ENCODE measurements at regions of chr12 and their contacts with region 1.

Region 1: GRCh38 chr12:67515679-67516340 is 132.7 kb upstream of the DYRK2 start:
- DNase-seq: peak; percentile 64 to 78 (median 70)
- H3K4me3 ChIP-seq: peak overlapping the region in 1 of 2 donors; percentile 4
- H3K4me3 Mint-ChIP-seq: peak overlapping the region; percentile 16 to 79 (median 69)
- H3K27ac ChIP-seq: no peak overlapping the region
- H3K27ac Mint-ChIP-seq: peak overlapping the region; percentile 50 to 91 (median 86)
- H3K4me1 ChIP-seq: peaks cover 64% of the 10 kb centered on the region
- H3K4me1 Mint-ChIP-seq: peaks cover 46 to 73% (median 54%) of the 10 kb centered on the region in 4 donors
- H3K27me3 ChIP-seq: no peaks in the 10 kb centered on the region
- H3K27me3 Mint-ChIP-seq: no peaks in the 10 kb centered on the region

Region 2: GRCh38 chr12:67173258-67173657 is 342.6 kb before region 1 on chr12:
- CTCF ChIA-PET with region 1: no interaction called
- POLR2A ChIA-PET with region 1: no interaction called
- intact Hi-C with region 1: no loop called
- DNase-seq: no peak
- H3K4me3 ChIP-seq: no peak overlapping the region
- H3K4me3 Mint-ChIP-seq: no peak overlapping the region
- H3K27ac ChIP-seq: no peak overlapping the region
- H3K27ac Mint-ChIP-seq: no peak overlapping the region
- H3K4me1 ChIP-seq: no peaks in the 10 kb centered on the region
- H3K4me1 Mint-ChIP-seq: no peaks in the 10 kb centered on the region
- H3K27me3 ChIP-seq: no peaks in the 10 kb centered on the region
- H3K27me3 Mint-ChIP-seq: peaks cover 13 to 15% of the 10 kb centered on the region in 2 donors

Region 3: GRCh38 chr12:67220065-67220464 is 295.7 kb before region 1 on chr12:
- CTCF ChIA-PET with region 1: no interaction called
- POLR2A ChIA-PET with region 1: no interaction called
- intact Hi-C with region 1: no loop called
- DNase-seq: no peak
- H3K4me3 ChIP-seq: no peak overlapping the region
- H3K4me3 Mint-ChIP-seq: no peak overlapping the region
- H3K27ac ChIP-seq: no peak overlapping the region
- H3K27ac Mint-ChIP-seq: peak overlapping the region in 1 of 7 donors; percentile 39
- H3K4me1 ChIP-seq: no peaks in the 10 kb centered on the region
- H3K4me1 Mint-ChIP-seq: no peaks in the 10 kb centered on the region
- H3K27me3 ChIP-seq: no peaks in the 10 kb centered on the region
- H3K27me3 Mint-ChIP-seq: peaks cover 0 to 3% of the 10 kb centered on the region in 2 donors

Region 4: DNA sequence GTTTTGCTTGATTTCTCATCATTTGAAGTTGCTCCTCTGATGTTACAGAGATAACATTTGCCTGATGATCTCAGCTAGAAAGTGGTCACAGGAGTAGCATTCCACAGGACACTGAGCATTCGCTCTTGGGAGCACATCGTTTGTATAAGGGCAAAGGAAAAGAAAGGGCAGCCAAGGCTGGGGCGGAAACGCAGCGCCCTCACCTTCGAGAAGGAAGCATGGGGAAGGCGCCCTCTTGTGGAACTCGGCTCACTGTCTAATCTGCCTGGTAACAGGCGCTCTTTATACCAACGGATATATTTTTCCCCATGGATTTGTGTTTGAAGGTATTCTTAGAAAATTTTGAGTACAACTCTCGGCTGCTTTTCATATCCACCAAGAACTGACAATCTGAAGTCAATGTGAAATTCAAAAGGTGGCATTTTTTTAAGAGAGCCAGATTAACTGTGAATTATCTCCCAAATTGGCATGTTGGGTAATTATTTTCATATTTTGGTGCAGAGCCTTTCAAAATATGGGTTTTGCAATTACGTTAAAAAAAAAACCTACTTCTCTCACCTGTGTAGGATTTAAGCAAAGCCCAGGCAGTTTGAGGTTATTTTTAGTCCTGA is 74.0 kb before region 1 on chr12:
- CTCF ChIA-PET with region 1: interaction called, 12 read pairs
- POLR2A ChIA-PET with region 1: interaction called, 6 read pairs
- intact Hi-C with region 1: loop called (anchors 5 kb)
- DNase-seq: peak; percentile 68 to 79 (median 68)
- H3K4me3 ChIP-seq: no peak overlapping the region
- H3K4me3 Mint-ChIP-seq: peak overlapping the region; percentile 43 to 72 (median 68)
- H3K27ac ChIP-seq: no peak overlapping the region
- H3K27ac Mint-ChIP-seq: peak overlapping the region in 6 of 7 donors; percentile 10 to 86 (median 82)
- H3K4me1 ChIP-seq: peaks cover 12% of the 10 kb centered on the region
- H3K4me1 Mint-ChIP-seq: peaks cover 21 to 35% (median 27%) of the 10 kb centered on the region in 4 donors
- H3K27me3 ChIP-seq: no peaks in the 10 kb centered on the region
- H3K27me3 Mint-ChIP-seq: no peaks in the 10 kb centered on the region

Region 5: DNA sequence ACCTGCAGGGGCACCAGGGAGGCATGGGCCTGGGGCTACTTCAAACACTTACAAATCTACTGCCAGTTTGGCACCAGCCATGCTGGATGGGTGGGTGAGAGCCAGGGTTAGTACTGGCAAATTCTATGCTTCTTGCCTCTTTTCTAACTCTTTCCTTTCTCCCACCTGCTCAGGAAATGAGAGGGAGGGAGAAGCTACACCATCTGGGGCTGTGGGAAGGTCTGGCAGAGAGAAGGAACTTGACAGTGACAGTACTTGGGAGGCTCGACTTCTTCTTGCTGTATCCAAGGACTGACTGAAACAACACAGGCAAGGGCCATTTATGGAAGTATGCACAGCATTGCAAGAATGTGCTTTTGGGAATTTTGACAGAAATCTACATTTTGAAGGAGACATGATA is 16.8 kb before region 1 on chr12:
- CTCF ChIA-PET with region 1: interaction called, 6 read pairs
- POLR2A ChIA-PET with region 1: interaction called, 10 read pairs
- intact Hi-C with region 1: no loop called
- DNase-seq: no peak
- H3K4me3 ChIP-seq: no peak overlapping the region
- H3K4me3 Mint-ChIP-seq: no peak overlapping the region
- H3K27ac ChIP-seq: no peak overlapping the region
- H3K27ac Mint-ChIP-seq: no peak overlapping the region
- H3K4me1 ChIP-seq: peaks cover 8% of the 10 kb centered on the region
- H3K4me1 Mint-ChIP-seq: peaks cover 16 to 25% (median 23%) of the 10 kb centered on the region in 4 donors
- H3K27me3 ChIP-seq: no peaks in the 10 kb centered on the region
- H3K27me3 Mint-ChIP-seq: no peaks in the 10 kb centered on the region

Region 6: DNA sequence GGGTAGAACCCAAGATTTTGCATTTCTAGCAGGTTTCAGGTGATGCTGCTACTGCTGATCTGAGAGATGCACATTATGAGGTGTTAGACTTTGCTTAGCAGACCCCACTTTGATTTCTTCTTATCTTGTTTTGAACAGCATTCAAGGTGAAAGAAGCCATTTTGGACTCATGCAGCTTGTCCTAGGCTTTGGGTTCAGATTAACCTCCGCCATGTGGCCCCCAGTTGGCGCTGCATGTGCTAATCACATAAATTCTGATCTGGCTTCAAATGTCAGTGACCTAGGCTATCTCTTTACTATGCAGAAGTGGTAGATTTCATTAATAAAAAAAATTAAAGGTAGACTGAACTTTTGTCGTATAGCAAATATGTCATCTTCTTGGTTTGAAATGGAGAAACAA is 43.0 kb after region 1 on chr12:
- CTCF ChIA-PET with region 1: interaction called, 6 read pairs
- POLR2A ChIA-PET with region 1: interaction called, 29 read pairs
- intact Hi-C with region 1: no loop called
- DNase-seq: no peak
- H3K4me3 ChIP-seq: no peak overlapping the region
- H3K4me3 Mint-ChIP-seq: no peak overlapping the region
- H3K27ac ChIP-seq: no peak overlapping the region
- H3K27ac Mint-ChIP-seq: no peak overlapping the region
- H3K4me1 ChIP-seq: peaks cover 22% of the 10 kb centered on the region
- H3K4me1 Mint-ChIP-seq: peaks cover 0 to 18% (median 10%) of the 10 kb centered on the region in 4 donors
- H3K27me3 ChIP-seq: no peaks in the 10 kb centered on the region
- H3K27me3 Mint-ChIP-seq: no peaks in the 10 kb centered on the region

Region 7: GRCh38 chr12:67592216-67593011 is 76.6 kb after region 1 on chr12:
- CTCF ChIA-PET with region 1: interaction called, 4 read pairs
- POLR2A ChIA-PET with region 1: interaction called, 17 read pairs
- intact Hi-C with region 1: no loop called
- DNase-seq: peak in 4 of 5 donors; percentile 29 to 53 (median 44)
- H3K4me3 ChIP-seq: peak overlapping the region in 1 of 2 donors; percentile 25
- H3K4me3 Mint-ChIP-seq: peak overlapping the region in 7 of 8 donors; percentile 45 to 76 (median 69)
- H3K27ac ChIP-seq: no peak overlapping the region
- H3K27ac Mint-ChIP-seq: peak overlapping the region; percentile 33 to 93 (median 82)
- H3K4me1 ChIP-seq: peaks cover 55% of the 10 kb centered on the region
- H3K4me1 Mint-ChIP-seq: peaks cover 36 to 62% (median 50%) of the 10 kb centered on the region in 4 donors
- H3K27me3 ChIP-seq: no peaks in the 10 kb centered on the region
- H3K27me3 Mint-ChIP-seq: no peaks in the 10 kb centered on the region

Region 8: DNA sequence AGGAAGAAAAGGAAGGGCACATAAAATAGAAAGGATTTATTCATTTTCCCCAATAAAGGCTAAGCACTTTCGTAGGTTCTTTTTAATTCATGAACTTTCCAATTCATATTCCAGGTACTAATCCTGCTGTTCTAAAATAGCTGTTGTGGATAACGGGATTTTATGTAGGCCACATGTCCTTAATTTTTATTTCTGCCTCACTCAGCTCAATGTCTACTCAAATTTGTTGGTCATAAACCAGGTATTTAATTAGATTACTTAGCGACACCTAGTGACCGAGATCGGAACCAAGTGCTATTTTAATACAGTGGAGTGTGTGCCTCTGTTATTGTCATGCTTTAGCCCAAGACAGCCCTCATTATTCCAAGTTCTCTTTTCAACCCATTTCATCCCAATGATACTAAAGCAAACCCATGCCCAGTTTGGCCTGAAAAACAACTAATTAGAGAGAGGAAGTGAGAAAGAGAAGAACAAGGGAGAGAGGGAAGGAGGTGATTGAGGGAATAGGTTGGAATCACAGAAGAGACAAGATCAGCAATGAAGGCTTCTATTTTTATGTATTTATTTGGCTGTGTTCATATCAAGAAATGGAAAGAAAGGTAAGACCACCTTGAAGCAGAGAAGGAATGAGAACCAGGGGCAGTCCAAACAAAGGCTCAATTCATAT is 427.5 kb after region 1 on chr12:
- CTCF ChIA-PET with region 1: interaction called, 12 read pairs
- POLR2A ChIA-PET with region 1: interaction called, 3 read pairs
- intact Hi-C with region 1: no loop called
- DNase-seq: peak; percentile 62 to 71 (median 65)
- H3K4me3 ChIP-seq: no peak overlapping the region
- H3K4me3 Mint-ChIP-seq: no peak overlapping the region
- H3K27ac ChIP-seq: no peak overlapping the region
- H3K27ac Mint-ChIP-seq: peak overlapping the region in 1 of 7 donors; percentile 37
- H3K4me1 ChIP-seq: no peaks in the 10 kb centered on the region
- H3K4me1 Mint-ChIP-seq: peaks cover 3 to 5% (median 4%) of the 10 kb centered on the region in 4 donors
- H3K27me3 ChIP-seq: no peaks in the 10 kb centered on the region
- H3K27me3 Mint-ChIP-seq: peaks cover 1 to 2% of the 10 kb centered on the region in 2 donors

Measured in CD4-positive, alpha-beta memory T cell (primary cell).